Posterior cingulate gyrus (tissue), 11 donors: ENCODE measurements at regions of chr13 and their contacts with region 1.

Region 1: GRCh38 chr13:24557081-24557480 is 44.5 kb upstream of the PARP4 start:
- DNase-seq: no peak

Region 2: GRCh38 chr13:24328145-24328544 is 228.9 kb before region 1 on chr13:
- intact Hi-C with region 1: loop called (anchors 10 kb)
- DNase-seq: peak in 1 of 10 donors; percentile 70